ENCODE measurements at regions of chr11 and their contacts with region 1.

Region 1: GRCh38 chr11:82867495-82868082 is 32.6 kb downstream of the PRCP start:
- DNase-seq: peak; percentile 31 to 56
- ATAC-seq: peak; percentile 39 to 67 (median 56)
- H3K4me3 ChIP-seq: peak overlapping the region; percentile 39
- H3K27ac ChIP-seq: no peak overlapping the region
- H3K4me1 ChIP-seq: peaks cover 12% of the 10 kb centered on the region
- H3K27me3 ChIP-seq: no peaks in the 10 kb centered on the region
- CTCF ChIP-seq: peak; percentile 78

Region 2: DNA sequence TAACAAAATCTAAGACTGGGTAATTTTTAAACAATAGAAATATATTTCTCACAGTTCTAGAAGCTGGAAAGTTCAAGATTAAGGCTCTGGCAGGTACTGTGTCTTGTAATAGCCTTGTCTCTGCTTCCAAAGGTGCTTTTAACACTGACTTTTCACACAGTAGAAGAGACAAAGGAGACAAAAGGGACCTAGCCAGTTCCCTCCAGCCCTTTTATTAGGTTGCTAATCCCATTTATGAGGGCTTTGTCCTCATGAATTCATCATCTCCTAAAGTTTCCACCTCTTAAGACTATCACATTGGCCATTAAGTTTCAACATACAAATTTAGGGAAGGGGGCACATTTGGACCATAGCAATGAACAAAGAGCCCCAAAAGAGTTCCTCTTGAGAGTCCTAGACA is 174.6 kb before region 1 on chr11:
- intact Hi-C with region 1: no loop called
- DNase-seq: no peak
- ATAC-seq: no peak
- H3K4me3 ChIP-seq: no peak overlapping the region
- H3K27ac ChIP-seq: no peak overlapping the region
- H3K4me1 ChIP-seq: no peaks in the 10 kb centered on the region
- H3K27me3 ChIP-seq: peaks cover 0 to 5% (median 4%) of the 10 kb centered on the region in 3 donors
- CTCF ChIP-seq: no peak

Region 3: DNA sequence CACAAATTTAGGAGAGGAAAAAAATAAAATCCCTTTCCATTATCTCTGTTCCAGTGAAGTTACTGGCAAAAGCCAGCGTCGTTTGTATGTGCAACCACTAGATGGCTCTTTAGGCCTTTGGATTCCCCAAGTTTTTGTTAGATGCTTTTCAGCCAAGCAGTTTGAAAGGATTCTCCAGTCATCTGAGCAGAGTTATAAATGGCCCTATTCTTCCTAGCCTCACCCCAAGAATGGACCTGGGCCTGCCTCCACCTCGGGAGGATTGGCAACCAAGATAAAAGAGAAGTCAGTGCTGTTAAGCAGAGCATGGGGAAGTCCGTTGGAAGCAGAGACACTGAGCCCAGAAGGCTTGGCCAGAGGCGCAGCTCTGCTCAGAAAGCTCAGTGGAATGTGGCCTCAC is 149.3 kb before region 1 on chr11:
- intact Hi-C with region 1: loop called (anchors 2 kb)
- DNase-seq: no peak
- ATAC-seq: peak in 3 of 4 donors; percentile 50 to 83 (median 56)
- H3K4me3 ChIP-seq: no peak overlapping the region
- H3K27ac ChIP-seq: no peak overlapping the region
- H3K4me1 ChIP-seq: no peaks in the 10 kb centered on the region
- H3K27me3 ChIP-seq: no peaks in the 10 kb centered on the region
- CTCF ChIP-seq: peak; percentile 71

Region 4: GRCh38 chr11:82900277-82901164 is 32.9 kb after region 1 on chr11 and contains the start of gene PRCP:
- intact Hi-C with region 1: loop called in 1 of 2 experiments (anchors 2 kb)
- DNase-seq: peak; percentile 92 to 95
- ATAC-seq: peak; percentile 91 to 93 (median 92)
- H3K4me3 ChIP-seq: peak within 1 kb of the TSS; percentile 84
- H3K27ac ChIP-seq: peak within 1 kb of the TSS; percentile 88
- H3K4me1 ChIP-seq: peaks cover 10% of the 10 kb centered on the region
- H3K27me3 ChIP-seq: no peaks in the 10 kb centered on the region
- CTCF ChIP-seq: no peak
- total RNA-seq, gene PRCP: 11.5 to 23.5 (median 15.2) TPM

Region 5: DNA sequence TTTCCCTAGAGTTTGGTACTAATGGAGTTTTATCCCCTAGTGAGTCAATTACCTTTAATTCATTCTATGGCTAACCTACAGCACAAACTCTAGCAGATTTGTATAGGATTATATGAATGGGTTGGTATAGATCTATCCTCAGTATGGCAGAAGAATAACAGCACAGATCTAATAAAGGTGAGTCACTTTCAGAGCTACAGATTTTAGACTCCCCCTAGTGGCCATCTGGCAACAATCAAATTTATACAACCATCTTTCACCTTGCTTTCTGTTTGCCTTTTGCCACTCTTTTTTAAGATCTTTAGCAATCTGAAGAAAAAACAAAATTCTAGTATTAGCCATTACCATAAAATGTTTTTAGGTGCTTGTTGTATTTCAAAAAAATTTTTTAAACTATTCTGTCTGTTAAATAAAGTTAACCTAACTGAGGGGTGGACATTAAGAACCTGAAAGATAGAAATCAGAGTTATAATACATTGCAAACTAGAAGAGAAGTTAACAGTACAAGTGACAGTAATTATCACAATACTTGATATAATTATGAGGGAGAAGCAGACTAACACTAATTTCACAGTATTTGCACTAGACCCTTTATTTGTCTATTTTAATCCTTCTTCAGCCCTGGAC is 59.8 kb after region 1 on chr11:
- intact Hi-C with region 1: loop called in 1 of 2 experiments (anchors 5 kb)
- DNase-seq: no peak
- ATAC-seq: peak in 2 of 4 donors; percentile 72 to 85
- H3K4me3 ChIP-seq: no peak overlapping the region
- H3K27ac ChIP-seq: no peak overlapping the region
- H3K4me1 ChIP-seq: no peaks in the 10 kb centered on the region
- H3K27me3 ChIP-seq: no peaks in the 10 kb centered on the region
- CTCF ChIP-seq: peak; percentile 83

Region 6: DNA sequence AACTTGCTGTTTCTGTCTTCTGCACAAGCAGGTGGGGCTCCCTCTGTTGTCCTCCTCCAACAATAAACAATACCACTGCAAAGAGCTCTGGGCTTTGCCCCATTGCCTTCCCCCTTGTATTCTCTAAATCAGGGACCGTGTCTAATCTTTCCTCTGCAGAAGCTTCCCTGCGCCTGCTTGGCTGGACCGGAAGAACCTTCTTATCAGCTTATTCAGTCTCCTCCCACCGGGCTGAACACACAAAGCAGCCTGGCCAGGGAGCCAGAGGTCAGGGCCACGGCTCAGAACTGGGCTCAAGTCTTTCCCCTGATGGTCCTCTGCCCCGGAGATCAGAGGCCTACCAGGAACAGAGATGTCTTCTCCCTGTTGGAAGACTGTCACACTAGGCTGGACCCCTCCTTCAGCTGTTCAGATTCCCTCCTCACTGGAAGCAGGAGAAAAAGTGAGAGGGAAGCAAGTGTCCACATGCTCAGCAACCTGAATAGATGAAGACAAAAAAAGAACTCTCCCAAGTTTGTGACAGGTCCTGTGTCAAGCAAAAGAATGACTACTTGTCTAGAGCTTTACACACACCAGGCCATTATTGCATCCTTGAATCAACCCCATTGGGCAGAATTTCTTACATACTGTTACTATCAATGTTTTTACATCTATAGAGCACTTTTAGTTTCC is 140.5 kb after region 1 on chr11:
- intact Hi-C with region 1: no loop called
- DNase-seq: peak; percentile 41 to 66
- ATAC-seq: peak; percentile 34 to 52 (median 42)
- H3K4me3 ChIP-seq: no peak overlapping the region
- H3K27ac ChIP-seq: peak overlapping the region; percentile 17
- H3K4me1 ChIP-seq: peaks cover 76% of the 10 kb centered on the region
- H3K27me3 ChIP-seq: no peaks in the 10 kb centered on the region
- CTCF ChIP-seq: no peak

Region 7: GRCh38 chr11:83249972-83250593 is 382.5 kb after region 1 on chr11:
- intact Hi-C with region 1: loop called in 1 of 2 experiments (anchors 5 kb)
- DNase-seq: no peak
- ATAC-seq: peak; percentile 59 to 85 (median 72)
- H3K4me3 ChIP-seq: no peak overlapping the region
- H3K27ac ChIP-seq: no peak overlapping the region
- H3K4me1 ChIP-seq: no peaks in the 10 kb centered on the region
- H3K27me3 ChIP-seq: no peaks in the 10 kb centered on the region
- CTCF ChIP-seq: peak; percentile 75

Region 8: GRCh38 chr11:83819933-83820549 is 952.5 kb after region 1 on chr11:
- intact Hi-C with region 1: loop called in 1 of 2 experiments (anchors 5 kb)
- DNase-seq: no peak
- ATAC-seq: peak in 1 of 4 donors; percentile 72
- H3K4me3 ChIP-seq: no peak overlapping the region
- H3K27ac ChIP-seq: no peak overlapping the region
- H3K4me1 ChIP-seq: no peaks in the 10 kb centered on the region
- H3K27me3 ChIP-seq: no peaks in the 10 kb centered on the region
- CTCF ChIP-seq: peak; percentile 61